ENCODE measurements at regions of chr1 and their contacts with region 1.

Region 1: DNA sequence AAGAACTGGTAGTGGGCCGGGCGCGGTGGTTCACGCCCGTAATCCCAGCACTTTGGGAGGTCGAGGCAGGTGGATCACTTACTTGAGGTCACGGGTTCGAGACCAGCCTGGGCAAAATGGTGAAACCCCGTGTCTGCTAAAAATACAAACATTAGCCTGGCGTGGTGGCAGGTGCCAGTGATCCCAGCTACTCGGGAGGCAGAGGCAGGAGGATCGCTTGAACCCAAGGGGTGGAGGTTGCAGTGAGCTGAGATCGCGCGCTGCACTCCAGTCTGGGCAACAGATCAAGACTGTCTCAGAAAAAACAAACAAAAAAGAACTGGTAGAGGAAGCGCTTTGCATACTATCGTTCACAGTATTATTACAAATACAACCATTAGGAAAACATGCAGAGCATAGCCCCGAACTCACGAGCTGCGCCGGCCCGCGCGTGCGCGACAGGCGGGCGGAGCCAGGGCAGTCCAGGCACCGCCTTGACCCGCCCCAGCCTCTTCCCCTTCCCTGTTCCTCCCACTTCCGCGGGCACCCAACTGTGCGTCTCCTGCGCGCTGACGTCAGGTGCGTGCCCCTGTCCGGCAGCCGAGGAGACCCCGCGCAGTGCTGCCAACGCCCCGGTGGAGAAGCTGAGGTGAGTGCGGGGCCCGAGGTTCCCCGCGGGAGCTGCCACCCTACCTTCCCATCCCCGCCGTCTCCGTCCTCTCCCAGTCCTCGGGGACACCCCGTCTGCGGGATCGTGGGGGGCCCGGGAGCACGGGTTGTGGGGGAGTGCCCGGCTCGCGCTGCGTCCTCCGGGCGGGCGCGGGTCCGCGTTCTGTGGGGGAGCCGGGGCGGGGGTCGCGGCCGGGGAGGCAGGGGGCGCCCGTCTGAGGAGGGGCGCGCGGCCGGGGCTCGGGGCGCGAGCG is at the start of gene CDC42:
- DNase-seq: peak; percentile 92 to 99 (median 97)
- H3K4me3 ChIP-seq: peak within 1 kb of the TSS; percentile 45 to 95 (median 87)
- H3K27ac ChIP-seq: peak within 1 kb of the TSS; percentile 31 to 99 (median 94)
- H3K27me3 ChIP-seq: no peaks in the 10 kb centered on the region
- CTCF ChIP-seq: peak in 20 of 56 donors; percentile 4 to 51 (median 24)
- total RNA-seq, gene CDC42: 71.6 to 204 (median 149) TPM

Region 2: GRCh38 chr1:21308847-21309652 is 743.3 kb before region 1 on chr1:
- intact Hi-C with region 1: no loop called
- DNase-seq: peak in 1 of 10 donors; percentile 33
- H3K4me3 ChIP-seq: no peak overlapping the region
- H3K27ac ChIP-seq: peak overlapping the region in 48 of 59 donors; percentile 23 to 97 (median 88)
- H3K27me3 ChIP-seq: no peaks in the 10 kb centered on the region
- CTCF ChIP-seq: no peak

Region 3: DNA sequence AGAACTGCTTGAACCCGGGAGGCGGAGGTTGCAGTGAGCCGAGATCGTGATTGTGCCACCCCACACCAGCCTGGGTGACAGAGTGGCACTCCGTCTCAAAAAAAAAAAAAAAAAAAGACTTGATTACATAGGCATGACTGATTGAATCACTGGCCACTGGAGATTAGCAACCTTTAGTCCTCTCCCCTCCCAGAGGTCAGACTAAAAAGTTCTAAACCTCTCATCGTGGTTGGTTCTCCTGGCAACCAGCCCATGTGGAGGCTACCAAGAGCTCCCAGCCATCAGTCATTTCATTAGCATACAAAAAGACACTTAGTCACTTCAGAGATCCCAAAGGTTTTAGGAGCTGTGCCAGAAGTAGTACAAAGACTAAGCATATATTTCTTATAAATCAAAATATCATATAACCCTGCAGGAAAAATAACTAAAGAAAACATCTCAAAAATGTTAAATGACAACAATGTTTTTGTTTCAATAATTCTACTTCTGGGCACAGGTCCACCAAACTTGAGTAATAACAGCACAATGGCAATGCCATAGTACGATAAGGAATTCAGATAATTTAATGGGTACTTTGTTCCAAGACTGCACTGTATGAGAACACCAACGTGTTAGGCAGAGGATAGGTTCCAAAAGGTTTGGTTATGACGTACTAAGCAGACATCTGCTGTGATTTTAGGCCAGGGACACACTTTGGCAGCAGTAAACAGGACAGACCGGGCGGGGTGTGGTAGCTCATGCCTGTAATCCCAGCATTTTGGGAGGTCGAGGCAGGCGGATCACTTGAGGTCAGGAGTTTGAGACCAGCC is 287.5 kb before region 1 on chr1:
- intact Hi-C with region 1: no loop called
- DNase-seq: no peak
- H3K4me3 ChIP-seq: no peak overlapping the region
- H3K27ac ChIP-seq: peak overlapping the region in 19 of 59 donors; percentile 0 to 70 (median 35)
- H3K27me3 ChIP-seq: no peaks in the 10 kb centered on the region
- CTCF ChIP-seq: no peak

Region 4: GRCh38 chr1:22025368-22026155 is 26.8 kb before region 1 on chr1:
- intact Hi-C with region 1: loop called (anchors 2 kb)
- DNase-seq: peak; percentile 74 to 93 (median 87)
- H3K4me3 ChIP-seq: peak overlapping the region; percentile 57 to 100 (median 93)
- H3K27ac ChIP-seq: peak overlapping the region; percentile 57 to 98 (median 90)
- H3K27me3 ChIP-seq: no peaks in the 10 kb centered on the region
- CTCF ChIP-seq: peak in 22 of 56 donors; percentile 4 to 45 (median 24)

Measured in dorsolateral prefrontal cortex (tissue), 120 donors.